ENCODE measurements at regions of chr16 and their contacts with region 1.

Region 1: GRCh38 chr16:740764-741505 is at the start of gene CIAO3:
- DNase-seq: peak; percentile 60
- ATAC-seq: peak; percentile 89
- H3K4me3 ChIP-seq: peak within 1 kb of the TSS; percentile 90
- H3K27ac ChIP-seq: peak within 1 kb of the TSS; percentile 76
- H3K4me1 ChIP-seq: peaks cover 27% of the 10 kb centered on the region
- H3K27me3 ChIP-seq: no peaks in the 10 kb centered on the region
- CTCF ChIP-seq: peak; percentile 85 to 99 (median 94); a peak in 5 of 6 replicates
- EP300 ChIP-seq: no peak
- POLR2A ChIP-seq: peak; percentile 84
- RAD21 ChIP-seq: 0 out of 2 replicates have a peak, but pooled peaks have one; percentile 6
- polyA plus RNA-seq, gene CIAO3: 1.4 to 4.0 TPM

Region 2: DNA sequence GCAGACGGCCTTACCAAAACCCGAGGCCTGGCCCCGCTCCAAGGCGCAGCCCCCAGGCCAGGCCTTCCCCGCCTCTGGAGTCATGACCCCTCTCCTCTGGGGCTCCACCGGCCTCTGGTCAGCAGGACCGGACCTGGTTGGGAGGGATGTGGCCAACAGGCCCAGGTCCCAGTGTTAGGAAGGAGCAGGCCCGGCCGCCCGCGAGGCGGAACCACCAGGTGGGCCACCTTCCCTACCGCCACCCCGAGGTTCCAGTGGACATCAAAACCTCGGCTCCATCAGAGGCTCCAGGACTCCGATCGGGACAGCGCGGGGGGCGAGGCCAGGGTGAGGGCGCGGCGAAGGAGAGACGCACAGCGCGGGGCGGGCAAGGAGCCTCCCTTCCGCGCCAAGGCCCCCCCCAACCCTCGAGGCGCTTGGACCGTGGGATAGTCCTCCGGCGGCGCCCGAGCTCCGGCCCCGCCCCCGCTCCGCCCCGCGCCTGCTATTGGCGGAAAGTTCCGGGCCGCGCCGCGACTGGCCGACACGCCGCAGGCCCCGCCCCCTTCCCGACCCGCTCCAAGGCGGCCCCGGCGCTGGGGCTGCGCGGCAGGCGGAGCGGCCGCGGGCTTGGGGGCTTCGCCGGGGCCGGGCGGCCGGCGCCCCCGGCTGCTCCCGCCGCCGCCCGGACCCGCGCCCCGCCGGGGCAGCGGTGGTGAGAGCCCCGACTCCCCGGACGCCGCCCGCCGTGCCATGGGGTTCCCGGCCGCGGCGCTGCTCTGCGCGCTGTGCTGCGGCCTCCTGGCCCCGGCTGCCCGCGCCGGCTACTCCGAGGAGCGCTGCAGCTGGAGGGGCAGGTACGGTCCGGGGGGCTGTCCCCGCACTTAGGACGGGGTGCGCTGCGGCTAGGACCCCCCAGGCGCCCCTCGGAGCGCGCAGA is 26.1 kb before region 1 on chr16 and contains the start of gene METRN:
- CTCF ChIA-PET with region 1: interaction called, 17 read pairs
- POLR2A ChIA-PET with region 1: interaction called, 29 read pairs
- RAD21 ChIA-PET with region 1: interaction called, 10 read pairs
- SMC1A ChIA-PET with region 1: interaction called, 3 read pairs
- in situ Hi-C with region 1: no loop called
- intact Hi-C with region 1: loop called (anchors 2 kb)
- DNase-seq: no peak
- ATAC-seq: peak; percentile 88
- H3K4me3 ChIP-seq: peak within 1 kb of the TSS; percentile 58
- H3K27ac ChIP-seq: no peak within 1 kb of the TSS
- H3K4me1 ChIP-seq: peaks cover 7% of the 10 kb centered on the region
- H3K27me3 ChIP-seq: no peaks in the 10 kb centered on the region
- CTCF ChIP-seq: no peak
- EP300 ChIP-seq: no peak
- POLR2A ChIP-seq: peak; percentile 55; the same call in 1 of the 2 replicates
- RAD21 ChIP-seq: no peak
- polyA plus RNA-seq, gene METRN: 0.11 TPM in 1 of 2 experiments, not detected in the other

Region 3: GRCh38 chr16:720990-721764 is 19.8 kb before region 1 on chr16 and contains the start of gene ANTKMT:
- CTCF ChIA-PET with region 1: interaction called, 13 read pairs
- POLR2A ChIA-PET with region 1: interaction called, 60 read pairs
- RAD21 ChIA-PET with region 1: interaction called, 10 read pairs
- SMC1A ChIA-PET with region 1: interaction called, 3 read pairs
- in situ Hi-C with region 1: no loop called
- intact Hi-C with region 1: loop called (anchors 2 kb)
- DNase-seq: no peak
- ATAC-seq: peak; percentile 87
- H3K4me3 ChIP-seq: peak within 1 kb of the TSS; percentile 86
- H3K27ac ChIP-seq: peak within 1 kb of the TSS; percentile 87
- H3K4me1 ChIP-seq: peaks cover 16% of the 10 kb centered on the region
- H3K27me3 ChIP-seq: no peaks in the 10 kb centered on the region
- CTCF ChIP-seq: no peak
- EP300 ChIP-seq: no peak
- POLR2A ChIP-seq: no peak
- RAD21 ChIP-seq: no peak
- polyA plus RNA-seq, gene ANTKMT: 0.58 to 3.1 TPM

Region 4: DNA sequence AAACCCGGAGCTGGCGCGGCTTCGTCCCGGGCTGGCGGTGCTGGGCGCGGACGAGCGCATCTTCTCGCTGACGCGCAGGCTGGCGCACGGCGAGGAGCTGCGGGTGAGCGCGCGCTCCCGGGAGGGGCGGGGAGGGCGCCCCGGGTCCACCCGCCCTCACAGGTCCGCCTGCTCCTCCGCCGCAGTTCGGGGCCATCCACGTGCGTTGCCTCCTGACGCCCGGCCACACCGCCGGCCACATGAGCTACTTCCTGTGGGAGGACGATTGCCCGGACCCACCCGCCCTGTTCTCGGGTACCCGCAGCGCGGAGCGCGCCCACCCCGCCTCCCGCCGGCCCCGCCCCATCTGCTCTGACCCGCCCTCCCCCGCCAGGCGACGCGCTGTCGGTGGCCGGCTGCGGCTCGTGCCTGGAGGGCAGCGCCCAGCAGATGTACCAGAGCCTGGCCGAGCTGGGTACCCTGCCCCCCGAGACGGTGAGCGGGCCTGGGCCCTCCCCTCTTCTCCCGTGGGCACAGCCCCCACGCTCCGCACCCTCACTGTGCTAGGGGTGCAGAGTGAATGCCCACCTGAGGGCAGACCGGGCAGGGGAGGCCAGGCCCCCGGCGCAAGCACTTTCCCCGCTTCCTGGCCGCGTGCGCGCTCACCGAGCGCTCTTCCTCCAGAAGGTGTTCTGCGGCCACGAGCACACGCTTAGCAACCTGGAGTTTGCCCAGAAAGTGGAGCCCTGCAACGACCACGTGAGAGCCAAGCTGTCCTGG is 12.6 kb before region 1 on chr16:
- CTCF ChIA-PET with region 1: interaction called, 4 read pairs
- POLR2A ChIA-PET with region 1: interaction called, 60 read pairs
- RAD21 ChIA-PET with region 1: interaction called, 8 read pairs
- SMC1A ChIA-PET with region 1: interaction called, 4 read pairs
- in situ Hi-C with region 1: no loop called
- intact Hi-C with region 1: no loop called
- DNase-seq: no peak
- ATAC-seq: peak; percentile 68
- H3K4me3 ChIP-seq: peak overlapping the region; percentile 65; the same call in 1 of the 2 replicates
- H3K27ac ChIP-seq: no peak overlapping the region
- H3K4me1 ChIP-seq: peaks cover 13% of the 10 kb centered on the region
- H3K27me3 ChIP-seq: no peaks in the 10 kb centered on the region
- CTCF ChIP-seq: no peak
- EP300 ChIP-seq: no peak
- POLR2A ChIP-seq: no peak
- RAD21 ChIP-seq: no peak

Region 5: DNA sequence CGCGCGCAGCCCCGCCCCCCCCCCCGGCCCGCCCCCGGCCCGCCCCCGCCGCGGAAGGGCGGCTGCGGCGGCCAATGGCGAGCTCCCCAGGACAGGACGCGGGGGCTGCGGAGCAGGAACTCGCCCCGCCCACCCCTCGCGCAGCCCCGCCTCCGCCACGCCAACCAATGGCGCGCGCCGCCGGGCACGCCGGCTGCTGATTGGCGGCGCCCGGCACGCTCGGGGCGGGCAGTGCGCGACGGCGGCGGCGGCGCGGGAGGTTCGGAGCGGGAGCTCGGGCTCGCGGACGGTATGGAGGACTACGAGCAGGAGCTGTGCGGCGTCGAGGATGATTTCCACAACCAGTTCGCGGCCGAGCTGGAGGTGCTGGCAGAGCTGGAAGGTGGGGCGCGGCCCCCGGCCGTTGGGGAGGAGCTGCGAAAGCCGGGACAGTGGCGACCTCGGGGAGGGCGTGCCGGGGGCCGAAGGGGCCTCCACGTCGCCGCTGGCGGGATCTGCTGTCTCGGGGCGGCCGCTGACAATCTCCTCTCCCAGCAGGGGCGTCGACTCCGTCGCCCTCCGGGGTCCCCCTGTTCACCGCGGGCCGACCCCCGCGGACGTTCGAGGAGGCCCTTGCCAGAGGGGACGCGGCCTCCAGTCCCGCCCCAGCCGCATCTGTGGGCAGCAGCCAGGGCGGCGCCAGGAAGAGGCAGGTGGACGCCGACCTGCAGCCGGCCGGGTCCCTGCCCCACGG is 47.6 kb after region 1 on chr16 and contains the start of gene CHTF18:
- CTCF ChIA-PET with region 1: interaction called, 5 read pairs
- POLR2A ChIA-PET with region 1: no interaction called
- RAD21 ChIA-PET with region 1: interaction called, 5 read pairs
- SMC1A ChIA-PET with region 1: no interaction called
- in situ Hi-C with region 1: loop called (anchors 5 kb)
- intact Hi-C with region 1: loop called (anchors 5 kb)
- DNase-seq: peak; percentile 45
- ATAC-seq: peak; percentile 91
- H3K4me3 ChIP-seq: peak within 1 kb of the TSS; percentile 89
- H3K27ac ChIP-seq: peak within 1 kb of the TSS; percentile 69
- H3K4me1 ChIP-seq: peaks cover 9% of the 10 kb centered on the region
- H3K27me3 ChIP-seq: no peaks in the 10 kb centered on the region
- CTCF ChIP-seq: no peak
- EP300 ChIP-seq: no peak
- POLR2A ChIP-seq: peak; percentile 76
- RAD21 ChIP-seq: no peak
- polyA plus RNA-seq, gene CHTF18: 1.6 to 6.2 TPM

Region 6: DNA sequence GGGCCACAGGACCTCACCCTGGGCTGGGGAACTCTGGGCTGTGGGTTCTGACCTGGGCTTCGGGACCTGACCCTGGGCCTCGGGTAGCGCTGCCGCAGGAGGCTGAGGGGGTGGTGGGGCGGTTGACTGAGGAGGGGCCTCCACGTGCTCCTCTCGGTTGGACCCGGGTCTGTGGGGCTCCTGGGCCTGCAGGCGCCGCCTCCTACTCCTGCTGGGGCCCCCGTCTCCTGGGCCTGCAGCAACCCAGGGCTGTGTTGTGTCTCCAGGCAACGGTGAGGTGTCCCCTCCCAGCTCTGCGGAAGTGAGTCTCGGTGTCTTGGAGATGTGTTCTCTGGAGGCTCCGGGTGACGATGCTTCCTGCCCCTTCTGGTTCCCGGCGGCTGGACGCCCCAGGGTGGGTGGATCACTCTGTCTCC is 101.1 kb after region 1 on chr16:
- CTCF ChIA-PET with region 1: no interaction called
- POLR2A ChIA-PET with region 1: no interaction called
- RAD21 ChIA-PET with region 1: no interaction called
- SMC1A ChIA-PET with region 1: no interaction called
- in situ Hi-C with region 1: no loop called
- intact Hi-C with region 1: no loop called
- DNase-seq: no peak
- ATAC-seq: no peak
- H3K4me3 ChIP-seq: no peak overlapping the region
- H3K27ac ChIP-seq: no peak overlapping the region
- H3K4me1 ChIP-seq: no peaks in the 10 kb centered on the region
- H3K27me3 ChIP-seq: no peaks in the 10 kb centered on the region
- CTCF ChIP-seq: no peak
- EP300 ChIP-seq: no peak
- POLR2A ChIP-seq: no peak
- RAD21 ChIP-seq: no peak

Measured in GM12878 (cell line).